ENCODE measurements at regions of chr7 and their contacts with region 1.

Region 1: GRCh38 chr7:43729214-43729923 is at the start of gene COA1:
- DNase-seq: peak; percentile 94
- H3K4me3 ChIP-seq: peak within 1 kb of the TSS; percentile 72 to 91 (median 76)
- H3K27ac ChIP-seq: peak within 1 kb of the TSS; percentile 79 to 87 (median 86)
- H3K4me1 ChIP-seq: peaks cover 9 to 49% (median 40%) of the 10 kb centered on the region in 4 donors
- H3K27me3 ChIP-seq: no peaks in the 10 kb centered on the region
- CTCF ChIP-seq: peak in 2 of 3 experiments; percentile 15 to 35
- EP300 ChIP-seq: no peak
- POLR2A ChIP-seq: no peak
- total RNA-seq, gene COA1: 26.1 to 49.0 (median 30.9) TPM

Region 2: GRCh38 chr7:42931834-42932651 is 797.3 kb before region 1 on chr7 and contains the starts of genes MRPL32 and PSMA2:
- intact Hi-C with region 1: loop called (anchors 10 kb)
- DNase-seq: peak; percentile 98
- H3K4me3 ChIP-seq: peak within 1 kb of the TSS; percentile 68 to 88 (median 71)
- H3K27ac ChIP-seq: peak within 1 kb of the TSS; percentile 78 to 90 (median 83)
- H3K4me1 ChIP-seq: peaks cover 46 to 63% (median 54%) of the 10 kb centered on the region in 4 donors
- H3K27me3 ChIP-seq: no peaks in the 10 kb centered on the region
- CTCF ChIP-seq: no peak
- EP300 ChIP-seq: no peak
- POLR2A ChIP-seq: peak; percentile 4
- total RNA-seq, gene MRPL32: 40.5 to 63.3 (median 45.8) TPM
- total RNA-seq, gene PSMA2: 29.7 to 73.5 (median 57.7) TPM

Region 3: DNA sequence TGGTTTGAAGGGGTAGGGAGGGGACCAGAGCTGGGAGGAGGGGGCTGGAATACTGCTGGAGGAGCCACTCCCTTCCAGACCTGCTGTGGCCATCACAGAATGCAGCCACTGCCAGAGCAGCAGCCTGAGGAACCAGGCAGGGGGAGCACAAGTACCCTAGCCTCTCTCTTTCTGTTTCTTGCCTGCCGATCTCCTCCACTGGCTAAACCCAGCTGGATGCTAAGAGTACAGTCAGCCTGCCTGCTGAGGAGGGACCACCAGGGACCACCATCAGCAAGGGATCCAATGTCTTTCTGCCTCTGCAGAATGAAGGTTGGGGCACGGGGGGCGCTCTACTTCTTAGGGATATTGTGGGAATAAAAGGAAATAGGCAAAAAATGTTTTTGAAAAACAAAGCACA is 33.8 kb after region 1 on chr7:
- intact Hi-C with region 1: loop called (anchors 2 kb)
- DNase-seq: peak; percentile 37
- H3K4me3 ChIP-seq: no peak overlapping the region
- H3K27ac ChIP-seq: no peak overlapping the region
- H3K4me1 ChIP-seq: peaks cover 4 to 58% (median 52%) of the 10 kb centered on the region in 4 donors
- H3K27me3 ChIP-seq: no peaks in the 10 kb centered on the region
- CTCF ChIP-seq: no peak
- EP300 ChIP-seq: no peak
- POLR2A ChIP-seq: no peak

Region 4: GRCh38 chr7:43834463-43835251 is 105.3 kb after region 1 on chr7:
- intact Hi-C with region 1: loop called (anchors 5 kb)
- DNase-seq: no peak
- H3K4me3 ChIP-seq: peak overlapping the region; percentile 16 to 34 (median 24)
- H3K27ac ChIP-seq: no peak overlapping the region
- H3K4me1 ChIP-seq: peaks cover 4 to 12% (median 8%) of the 10 kb centered on the region in 4 donors
- H3K27me3 ChIP-seq: no peaks in the 10 kb centered on the region
- CTCF ChIP-seq: no peak
- EP300 ChIP-seq: no peak
- POLR2A ChIP-seq: no peak

Region 5: GRCh38 chr7:44320794-44321371 is 591.5 kb after region 1 on chr7:
- intact Hi-C with region 1: no loop called
- DNase-seq: peak; percentile 82
- H3K4me3 ChIP-seq: no peak overlapping the region
- H3K27ac ChIP-seq: no peak overlapping the region
- H3K4me1 ChIP-seq: peaks cover 8 to 15% (median 9%) of the 10 kb centered on the region in 4 donors
- H3K27me3 ChIP-seq: peaks cover 0 to 24% (median 7%) of the 10 kb centered on the region in 4 donors
- CTCF ChIP-seq: no peak
- EP300 ChIP-seq: no peak
- POLR2A ChIP-seq: no peak

Measured in esophagus muscularis mucosa (tissue), 4 donors.